Ovary (tissue), 10 donors: ENCODE measurements at regions of chr10 and their contacts with region 1.

Region 1: DNA sequence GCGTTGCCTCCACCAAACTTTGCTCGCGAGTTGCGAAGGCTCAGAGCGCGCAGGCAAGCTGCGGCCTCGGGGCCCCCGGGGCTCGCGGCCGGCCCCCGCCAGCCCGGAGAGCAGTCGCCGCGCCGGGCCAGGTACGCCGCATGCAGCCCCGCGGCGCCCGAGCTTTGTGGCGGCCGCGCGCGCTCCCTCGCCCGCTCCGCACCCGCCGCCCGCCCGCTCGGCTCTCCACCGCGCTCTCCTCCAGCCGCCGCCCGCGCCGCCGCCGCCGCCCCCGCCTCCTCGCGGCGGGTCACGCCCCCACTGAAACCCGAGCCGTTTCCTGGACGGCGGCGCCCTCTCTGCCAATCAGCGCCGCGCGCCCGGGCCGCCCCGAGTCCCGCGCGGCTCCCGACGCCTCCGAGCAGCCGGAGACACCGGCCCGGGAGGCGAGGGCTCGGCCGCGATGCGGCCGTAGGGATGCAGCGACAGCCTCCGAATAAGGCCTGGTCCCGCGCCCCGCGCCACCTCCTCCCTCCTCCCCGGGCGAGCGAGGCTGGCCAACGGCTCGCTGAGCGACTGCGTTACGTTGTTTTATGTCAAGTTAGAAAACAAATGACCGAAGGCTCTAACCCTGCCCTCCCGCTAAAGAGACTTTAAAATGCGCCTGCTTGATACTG is at the start of gene FGFR2:
- DNase-seq: peak; percentile 86 to 92 (median 88)
- H3K4me3 ChIP-seq: peak within 1 kb of the TSS; percentile 78
- H3K27ac ChIP-seq: peak within 1 kb of the TSS; percentile 74 to 83
- H3K4me1 ChIP-seq: no peaks in the 10 kb centered on the region
- H3K27me3 ChIP-seq: no peaks in the 10 kb centered on the region
- CTCF ChIP-seq: no peak
- EP300 ChIP-seq: no peak
- POLR2A ChIP-seq: no peak
- total RNA-seq, gene FGFR2: 11.9 to 52.2 (median 29.7) TPM

Region 2: DNA sequence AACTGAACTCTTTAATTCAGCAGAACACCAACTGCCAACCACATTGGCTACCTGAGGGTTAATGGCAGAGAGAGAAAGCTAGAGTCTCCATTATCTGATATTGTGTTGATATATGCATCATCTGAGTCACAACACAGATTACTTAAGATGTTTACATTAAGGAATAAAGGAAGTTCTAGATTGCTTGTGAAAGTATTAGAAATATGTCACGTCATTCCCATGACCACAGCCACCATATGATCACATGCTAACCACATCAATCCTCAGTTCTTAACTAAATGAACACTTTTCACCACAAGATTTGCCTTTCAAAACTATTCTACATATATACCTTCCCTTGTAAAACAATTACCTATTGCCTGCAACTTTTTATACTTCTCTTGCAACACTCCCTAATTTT is 338.0 kb before region 1 on chr10:
- intact Hi-C with region 1: no loop called
- DNase-seq: no peak
- H3K4me3 ChIP-seq: no peak overlapping the region
- H3K27ac ChIP-seq: no peak overlapping the region
- H3K4me1 ChIP-seq: no peaks in the 10 kb centered on the region
- H3K27me3 ChIP-seq: no peaks in the 10 kb centered on the region
- CTCF ChIP-seq: no peak
- EP300 ChIP-seq: no peak
- POLR2A ChIP-seq: no peak

Region 3: GRCh38 chr10:121302541-121303180 is 295.7 kb before region 1 on chr10:
- intact Hi-C with region 1: loop called in 1 of 4 experiments (anchors 10 kb)
- DNase-seq: no peak
- H3K4me3 ChIP-seq: no peak overlapping the region
- H3K27ac ChIP-seq: no peak overlapping the region
- H3K4me1 ChIP-seq: no peaks in the 10 kb centered on the region
- H3K27me3 ChIP-seq: no peaks in the 10 kb centered on the region
- CTCF ChIP-seq: no peak
- EP300 ChIP-seq: no peak
- POLR2A ChIP-seq: no peak

Region 4: DNA sequence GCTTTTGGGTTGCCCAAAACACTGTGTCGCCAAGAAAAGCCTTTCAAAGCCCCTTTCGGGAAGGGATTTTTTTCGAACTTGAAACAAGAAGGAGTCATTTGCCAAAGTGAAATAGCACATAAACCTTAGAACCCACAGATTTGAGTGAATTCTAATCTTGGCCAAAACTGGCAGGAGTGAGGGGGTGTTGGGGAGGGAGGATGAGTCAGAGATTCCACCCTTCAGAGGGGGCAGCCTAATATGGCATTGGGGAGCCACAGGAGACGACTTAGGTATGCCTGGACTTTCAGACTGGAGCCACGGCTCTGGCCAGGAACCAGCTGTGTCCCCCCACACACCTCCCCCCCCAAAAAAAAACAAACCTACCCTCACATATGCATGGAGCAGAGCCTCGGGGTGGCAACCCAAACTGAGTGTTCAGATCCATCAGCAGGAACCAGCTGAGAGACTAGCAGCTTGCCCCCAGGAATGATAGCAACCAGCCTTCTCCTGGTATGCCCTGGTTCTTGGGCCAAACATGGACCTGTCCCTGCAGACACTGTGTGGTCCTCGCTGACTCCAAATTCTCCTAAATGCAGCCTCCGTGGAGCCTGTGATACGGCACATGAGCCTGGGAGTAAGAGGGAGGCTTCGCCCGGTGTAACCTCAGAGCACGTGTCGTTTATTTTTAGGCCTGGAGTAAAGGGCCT is 138.4 kb before region 1 on chr10:
- intact Hi-C with region 1: loop called in 1 of 4 experiments (anchors 10 kb)
- DNase-seq: peak in 1 of 5 donors; percentile 20
- H3K4me3 ChIP-seq: no peak overlapping the region
- H3K27ac ChIP-seq: no peak overlapping the region
- H3K4me1 ChIP-seq: no peaks in the 10 kb centered on the region
- H3K27me3 ChIP-seq: no peaks in the 10 kb centered on the region
- CTCF ChIP-seq: no peak
- EP300 ChIP-seq: peak; percentile 27
- POLR2A ChIP-seq: no peak

Region 5: DNA sequence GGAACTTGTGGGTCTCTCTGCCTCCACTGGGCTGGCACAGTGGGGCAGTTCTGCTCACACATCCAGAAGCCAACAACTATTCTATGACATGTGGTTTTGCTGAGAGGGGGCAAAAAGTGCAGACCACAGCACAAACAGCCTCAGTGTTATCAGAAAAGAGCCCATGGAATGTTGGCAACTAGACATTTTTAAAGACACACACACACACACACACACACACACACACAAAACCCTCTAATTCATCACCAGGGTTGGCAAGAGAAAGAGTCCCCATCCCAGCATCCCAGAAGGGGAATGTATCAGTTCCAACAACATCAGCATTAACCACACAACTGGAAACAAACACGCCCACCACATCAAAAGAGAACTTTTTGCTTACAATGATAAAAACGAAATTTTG is 117.1 kb before region 1 on chr10:
- intact Hi-C with region 1: loop called in 1 of 4 experiments (anchors 10 kb)
- DNase-seq: peak in 3 of 5 donors; percentile 32 to 45 (median 41)
- H3K4me3 ChIP-seq: no peak overlapping the region
- H3K27ac ChIP-seq: no peak overlapping the region
- H3K4me1 ChIP-seq: no peaks in the 10 kb centered on the region
- H3K27me3 ChIP-seq: no peaks in the 10 kb centered on the region
- CTCF ChIP-seq: no peak
- EP300 ChIP-seq: no peak
- POLR2A ChIP-seq: no peak